GM10248 (cell line): ENCODE measurements at regions of chr9 and their contacts with region 1.

Region 1: GRCh38 chr9:5886114-5886939 is 4.4 kb upstream of the MLANA start:
- DNase-seq: peak; percentile 88
- CTCF ChIP-seq: peak; percentile 96

Region 2: DNA sequence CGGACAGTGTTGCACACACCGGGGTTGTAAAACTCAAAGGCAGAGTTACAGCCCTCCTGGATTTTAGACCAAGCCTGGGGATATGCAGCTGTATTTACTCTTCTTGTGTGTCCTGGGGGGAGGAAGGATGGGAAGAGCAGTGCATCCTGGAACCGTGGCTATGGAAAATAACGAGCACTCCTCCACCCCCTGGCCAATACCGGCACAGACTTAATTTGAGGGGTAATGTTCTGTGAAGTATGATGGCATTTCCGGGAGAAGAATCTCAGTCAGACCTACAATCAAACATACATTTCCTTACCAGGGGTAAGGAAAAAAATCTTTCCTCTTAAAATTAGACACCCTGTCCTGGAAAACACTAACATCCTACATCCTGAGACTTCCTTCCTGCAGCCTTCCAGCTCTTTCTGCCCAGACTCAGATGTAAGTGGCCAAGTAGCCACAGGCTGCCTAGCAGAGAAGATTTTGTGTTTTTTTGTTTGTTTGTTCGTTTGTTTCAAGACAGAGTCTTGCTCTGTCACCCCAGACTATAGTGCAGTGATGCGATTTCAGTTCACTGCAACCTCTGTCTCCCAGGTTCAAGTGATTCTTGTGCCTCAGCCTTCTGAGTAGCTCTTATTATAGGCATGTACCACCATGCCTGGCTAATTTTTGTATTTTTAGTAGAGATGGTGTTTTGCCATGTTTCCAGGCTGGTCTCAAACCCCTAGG is 42.4 kb before region 1 on chr9:
- CTCF ChIA-PET with region 1: interaction called, 12 read pairs
- POLR2A ChIA-PET with region 1: no interaction called
- DNase-seq: no peak
- CTCF ChIP-seq: no peak

Region 3: GRCh38 chr9:5863092-5863746 is 23.1 kb before region 1 on chr9:
- CTCF ChIA-PET with region 1: interaction called, 27 read pairs
- POLR2A ChIA-PET with region 1: no interaction called
- DNase-seq: no peak
- CTCF ChIP-seq: no peak

Region 4: DNA sequence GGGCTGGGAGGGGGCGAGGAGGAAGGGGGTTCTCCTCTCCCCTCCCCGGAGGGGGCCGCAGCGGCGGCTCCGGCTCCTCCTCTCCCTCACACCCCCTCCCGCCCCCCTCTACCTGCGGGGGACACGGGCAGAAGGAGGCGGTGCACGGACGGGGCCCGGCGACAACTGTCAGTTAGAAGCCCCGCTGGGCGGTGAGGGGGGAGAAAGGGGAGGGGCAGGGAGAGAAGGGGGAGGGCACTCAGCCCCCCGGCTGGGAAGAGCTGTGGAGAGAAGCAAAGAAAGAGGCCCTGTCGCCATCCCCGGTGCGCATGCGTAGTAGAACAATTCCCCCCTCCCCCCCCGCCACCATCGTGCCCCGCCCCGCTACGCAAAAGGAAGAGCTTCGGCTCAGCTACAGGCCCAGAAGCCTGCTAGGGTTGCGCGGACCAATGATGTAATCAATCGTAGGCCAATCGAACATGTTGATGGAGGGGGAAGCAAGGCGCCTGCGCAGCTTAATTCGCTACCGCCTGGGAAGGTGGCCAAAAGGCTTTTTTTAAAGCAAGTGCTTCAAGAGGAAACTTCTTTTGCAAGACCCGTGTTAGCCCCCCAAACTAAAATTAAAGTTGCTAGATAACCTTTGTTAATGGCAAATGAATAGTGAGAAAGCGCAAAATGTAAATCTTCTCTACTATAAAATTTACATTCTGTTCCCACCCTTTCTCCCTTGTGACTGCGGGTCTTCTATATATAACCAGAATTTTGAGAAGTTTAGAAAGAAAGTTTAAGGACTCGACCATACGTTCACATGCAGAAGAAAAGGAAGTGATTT is 122.0 kb after region 1 on chr9:
- CTCF ChIA-PET with region 1: interaction called, 16 read pairs
- POLR2A ChIA-PET with region 1: interaction called, 3 read pairs
- DNase-seq: peak; percentile 92
- CTCF ChIP-seq: no peak

Region 5: DNA sequence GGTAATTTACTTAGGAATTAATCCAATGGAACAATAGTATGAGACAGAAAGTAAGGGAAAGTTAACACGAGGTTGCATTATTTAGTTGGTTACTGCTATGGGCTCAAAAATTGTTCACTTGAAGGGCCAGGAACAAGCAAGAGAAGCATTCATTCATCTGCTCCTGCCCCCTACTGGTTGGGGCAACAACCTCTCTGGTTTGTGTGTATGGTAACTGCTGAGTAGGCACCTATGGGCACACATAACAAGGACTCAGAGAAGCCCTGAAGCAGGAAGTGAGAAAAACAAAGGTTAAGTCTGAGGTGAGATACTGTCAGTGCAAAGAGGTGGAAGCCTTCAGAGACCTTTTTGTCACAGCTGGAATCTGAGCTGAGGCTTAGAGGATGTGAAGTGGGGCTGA is 163.5 kb after region 1 on chr9:
- CTCF ChIA-PET with region 1: interaction called, 82 read pairs
- POLR2A ChIA-PET with region 1: no interaction called
- DNase-seq: peak; percentile 41
- CTCF ChIP-seq: peak; percentile 42

Region 6: DNA sequence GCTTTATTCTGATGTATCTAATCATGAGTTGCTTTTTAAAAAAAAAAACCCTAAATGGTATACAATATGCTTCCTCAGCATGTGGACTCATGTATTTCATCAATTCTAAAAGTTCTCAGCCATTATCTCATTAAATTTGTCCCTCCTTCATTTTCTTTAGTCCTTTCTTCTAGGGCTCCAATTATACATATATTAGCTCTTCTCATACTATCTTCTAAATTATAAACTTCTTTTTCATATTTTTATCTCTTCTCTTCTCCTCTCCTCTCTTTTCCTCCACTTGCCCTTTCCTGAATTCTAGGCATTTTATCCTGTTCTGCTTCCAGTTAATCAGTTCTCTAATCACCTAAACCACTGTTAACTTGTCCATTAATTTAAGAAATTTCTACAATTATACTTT is 274.3 kb after region 1 on chr9:
- CTCF ChIA-PET with region 1: no interaction called
- POLR2A ChIA-PET with region 1: no interaction called
- DNase-seq: no peak
- CTCF ChIP-seq: no peak

Region 7: DNA sequence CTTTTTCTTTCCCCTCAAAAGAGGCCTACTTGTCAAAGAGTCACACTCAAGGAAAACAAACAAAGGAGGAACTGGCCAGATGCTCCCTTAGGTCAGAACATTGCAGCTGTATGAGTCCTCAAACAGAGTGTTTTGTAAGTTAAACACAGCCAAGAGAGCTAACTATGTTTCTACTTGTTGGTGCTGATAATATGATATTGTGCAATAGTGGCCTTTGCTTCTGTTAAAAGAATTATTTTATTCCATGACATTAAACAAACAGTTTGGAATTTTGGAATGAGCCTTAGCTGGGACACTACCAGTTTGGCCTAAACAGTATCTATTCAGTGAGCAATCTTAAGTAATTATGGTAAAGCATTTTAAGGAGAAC is 385.9 kb after region 1 on chr9:
- CTCF ChIA-PET with region 1: no interaction called
- POLR2A ChIA-PET with region 1: no interaction called
- DNase-seq: no peak
- CTCF ChIP-seq: no peak

Region 8: GRCh38 chr9:6305954-6306563 is 419.7 kb after region 1 on chr9:
- CTCF ChIA-PET with region 1: interaction called, 43 read pairs
- POLR2A ChIA-PET with region 1: no interaction called
- DNase-seq: peak; percentile 42
- CTCF ChIP-seq: peak; percentile 50